Head of caudate nucleus (tissue), 42 donors: ENCODE measurements at regions of chr1 and their contacts with region 1.

Region 1: DNA sequence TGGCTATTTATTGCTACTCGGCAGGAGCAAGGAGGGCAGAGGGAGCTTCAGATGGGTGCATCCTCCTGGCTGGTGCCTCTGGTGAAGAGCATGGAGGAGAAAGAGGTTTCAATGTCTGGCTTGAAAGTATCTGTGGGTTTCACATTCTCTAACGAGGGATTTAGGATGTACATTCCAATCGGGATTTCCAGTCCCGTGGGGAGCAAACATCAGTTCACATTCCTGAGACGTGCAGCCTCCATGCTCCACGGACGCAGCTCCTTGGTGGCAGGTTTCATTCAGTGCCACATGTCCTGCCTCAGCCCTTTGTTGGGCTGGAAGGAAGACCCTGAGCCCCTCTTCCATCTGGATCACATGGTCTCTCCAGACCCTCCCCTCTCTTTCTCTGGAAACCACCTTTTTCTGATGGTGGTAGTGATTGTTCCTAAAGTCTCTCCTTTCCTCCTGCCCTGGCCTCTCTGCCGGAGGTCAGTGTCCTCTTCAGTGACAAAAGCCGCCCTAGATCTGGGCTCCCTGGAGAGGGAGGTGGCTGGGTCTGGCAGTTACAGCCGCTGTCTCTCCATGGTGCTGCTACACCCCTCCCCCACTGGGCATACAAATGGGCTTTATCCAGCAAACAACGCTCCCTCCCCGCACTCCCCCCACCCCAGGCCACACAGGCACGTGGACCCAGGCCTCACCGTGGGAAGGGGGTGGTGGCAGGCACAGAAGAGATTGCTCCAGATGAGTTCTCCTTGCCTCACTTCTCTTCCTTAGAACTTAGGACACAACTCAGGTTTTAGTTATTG is 826 bp upstream of the CA14 start:
- DNase-seq: peak; percentile 49 to 91 (median 78)

Region 2: GRCh38 chr1:150281837-150282653 is 25.3 kb after region 1 on chr1 and contains the start of gene CIART:
- intact Hi-C with region 1: loop called (anchors 2 kb)
- DNase-seq: peak; percentile 85 to 99 (median 94)

Region 3: GRCh38 chr1:150515328-150516048 is 258.7 kb after region 1 on chr1 and contains the start of gene FALEC:
- intact Hi-C with region 1: no loop called
- DNase-seq: peak; percentile 90 to 99 (median 97)